SK-N-SH (cell line): ENCODE measurements at regions of chr9 and their contacts with region 1.

Region 1: GRCh38 chr9:113591001-113591898 is 127.7 kb downstream of the RGS3 start:
- DNase-seq: peak; percentile 78
- H3K4me3 ChIP-seq: no peak overlapping the region; a peak in 1 of 4 replicates
- H3K27ac ChIP-seq: no peak overlapping the region
- H3K4me1 ChIP-seq: peaks cover 11 to 32% of the 10 kb centered on the region in 2 experiments
- H3K27me3 ChIP-seq: no peaks in the 10 kb centered on the region
- CTCF ChIP-seq: peak; percentile 93
- EP300 ChIP-seq: no peak
- RAD21 ChIP-seq: peak; percentile 99

Region 2: GRCh38 chr9:113401027-113401792 is 190.0 kb before region 1 on chr9 and contains the start of gene ALAD:
- CTCF ChIA-PET with region 1: interaction called, 145 read pairs
- POLR2A ChIA-PET with region 1: no interaction called
- DNase-seq: peak; percentile 100
- H3K4me3 ChIP-seq: peak within 1 kb of the TSS; percentile 85 to 98
- H3K27ac ChIP-seq: peak within 1 kb of the TSS; percentile 46 to 62; a peak in 3 of 4 replicates
- H3K4me1 ChIP-seq: peaks cover 8 to 10% of the 10 kb centered on the region in 2 experiments; a peak in 1 of 4 replicates
- H3K27me3 ChIP-seq: no peaks in the 10 kb centered on the region
- CTCF ChIP-seq: peak; percentile 93
- EP300 ChIP-seq: no peak
- RAD21 ChIP-seq: peak; percentile 69
- polyA plus RNA-seq, gene ALAD: 10.7 and 11.8 TPM in 2 replicates

Region 3: DNA sequence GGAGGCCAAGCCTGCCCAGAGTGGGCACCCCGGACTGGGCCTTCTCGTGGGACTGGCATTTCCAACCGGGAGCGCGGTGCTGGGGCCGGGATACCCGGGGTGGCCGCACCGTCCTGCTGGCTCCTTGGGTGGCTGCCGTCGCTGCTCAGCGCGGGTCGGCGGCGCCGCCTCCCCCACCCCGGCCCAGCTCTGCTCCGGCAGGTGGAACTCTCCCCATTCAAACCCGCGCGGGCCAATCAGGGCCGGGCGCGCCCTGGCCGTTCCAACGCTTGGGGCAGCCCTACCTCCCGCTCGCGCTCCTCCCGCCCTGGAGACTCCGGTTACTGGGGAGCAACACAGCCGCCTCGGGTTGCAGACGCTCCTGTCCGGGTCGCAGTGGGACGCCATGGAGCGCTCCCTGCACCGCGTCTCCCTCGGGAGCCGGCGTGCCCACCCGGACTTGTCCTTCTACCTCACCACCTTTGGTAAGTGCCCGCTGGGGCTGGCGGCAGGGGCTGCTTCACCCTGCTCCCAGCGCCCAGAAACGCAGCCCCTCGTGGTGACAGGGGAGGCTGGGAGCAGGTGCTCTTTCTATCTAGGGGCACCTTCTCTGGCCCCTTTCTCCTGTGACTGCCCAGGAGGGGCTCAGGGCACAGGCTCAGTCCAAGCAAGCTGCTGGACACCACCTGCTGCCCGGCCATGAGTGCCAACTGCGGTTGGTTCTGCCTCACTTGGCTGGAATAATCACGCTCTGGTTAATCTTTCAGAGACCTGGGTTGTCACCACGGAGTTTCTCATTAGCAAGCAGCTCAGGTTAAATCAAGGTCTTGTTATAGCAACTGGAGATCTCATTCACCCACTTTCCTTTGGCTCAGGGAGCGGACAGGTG is 127.6 kb before region 1 on chr9 and contains the start of gene RGS3:
- CTCF ChIA-PET with region 1: interaction called, 17 read pairs
- POLR2A ChIA-PET with region 1: no interaction called
- DNase-seq: no peak
- H3K4me3 ChIP-seq: no peak within 1 kb of the TSS
- H3K27ac ChIP-seq: no peak within 1 kb of the TSS
- H3K4me1 ChIP-seq: peaks cover 0 to 18% of the 10 kb centered on the region in 2 experiments; a peak in 2 of 4 replicates
- H3K27me3 ChIP-seq: no peaks in the 10 kb centered on the region
- CTCF ChIP-seq: no peak
- EP300 ChIP-seq: no peak
- RAD21 ChIP-seq: no peak
- polyA plus RNA-seq, gene RGS3: 50.6 and 60.7 TPM in 2 replicates

Region 4: DNA sequence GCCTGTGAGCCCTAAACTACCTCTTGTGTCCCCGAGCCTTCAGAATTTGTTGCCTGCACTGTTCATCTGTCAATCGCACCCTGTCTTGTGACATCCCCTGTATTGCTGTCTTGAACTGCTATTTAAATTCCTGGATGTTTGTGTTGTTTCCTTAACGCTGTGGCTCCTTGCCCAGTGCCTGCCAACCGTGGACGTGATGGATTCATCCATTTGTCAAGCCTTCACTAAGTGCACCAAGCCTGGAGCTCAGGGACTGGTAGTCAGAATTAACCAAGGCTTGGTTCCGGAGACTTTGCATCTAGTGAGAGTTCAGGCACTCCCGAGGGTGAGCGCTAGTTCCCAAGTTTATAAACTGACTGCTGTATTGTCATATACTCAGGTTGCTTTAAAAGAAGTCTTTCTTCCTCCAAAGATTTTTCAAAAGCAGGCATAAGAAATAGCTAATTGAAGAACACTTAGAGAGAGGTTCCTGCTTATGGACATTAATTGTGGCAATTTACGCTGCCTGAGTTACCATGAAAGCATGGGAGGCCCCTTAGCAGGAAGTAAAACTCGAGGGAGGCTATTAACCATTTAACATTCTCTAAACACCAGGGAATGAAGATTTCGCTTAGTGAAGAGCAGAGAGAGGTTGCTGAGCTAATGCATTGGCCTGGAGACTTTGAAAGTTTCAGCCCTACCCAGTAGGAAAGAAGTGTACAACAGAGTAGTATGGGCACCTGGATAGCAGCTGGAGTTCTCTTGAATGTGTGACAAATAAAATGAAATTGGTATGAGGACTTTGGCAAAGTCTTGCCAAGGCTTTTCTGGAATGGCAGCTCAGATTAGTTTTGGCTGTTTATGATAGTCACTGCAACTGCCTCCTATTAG is 98.7 kb before region 1 on chr9:
- CTCF ChIA-PET with region 1: interaction called, 13 read pairs
- POLR2A ChIA-PET with region 1: no interaction called
- DNase-seq: no peak
- H3K4me3 ChIP-seq: no peak overlapping the region
- H3K27ac ChIP-seq: no peak overlapping the region
- H3K4me1 ChIP-seq: peaks cover 6 to 12% of the 10 kb centered on the region in 2 experiments; a peak in 2 of 4 replicates
- H3K27me3 ChIP-seq: no peaks in the 10 kb centered on the region
- CTCF ChIP-seq: no peak
- EP300 ChIP-seq: no peak
- RAD21 ChIP-seq: no peak

Region 5: GRCh38 chr9:113578882-113579282 is 12.4 kb before region 1 on chr9:
- CTCF ChIA-PET with region 1: interaction called, 44 read pairs
- POLR2A ChIA-PET with region 1: interaction called, 7 read pairs
- DNase-seq: peak; percentile 60
- H3K4me3 ChIP-seq: no peak overlapping the region
- H3K27ac ChIP-seq: peak overlapping the region; percentile 87 to 90
- H3K4me1 ChIP-seq: peaks cover 32 to 50% of the 10 kb centered on the region in 2 experiments
- H3K27me3 ChIP-seq: no peaks in the 10 kb centered on the region
- CTCF ChIP-seq: no peak
- EP300 ChIP-seq: peak in 1 of 2 experiments; percentile 94; a peak in 3 of 4 replicates
- RAD21 ChIP-seq: peak; percentile 18; the same call in 1 of the 2 replicates

Region 6: DNA sequence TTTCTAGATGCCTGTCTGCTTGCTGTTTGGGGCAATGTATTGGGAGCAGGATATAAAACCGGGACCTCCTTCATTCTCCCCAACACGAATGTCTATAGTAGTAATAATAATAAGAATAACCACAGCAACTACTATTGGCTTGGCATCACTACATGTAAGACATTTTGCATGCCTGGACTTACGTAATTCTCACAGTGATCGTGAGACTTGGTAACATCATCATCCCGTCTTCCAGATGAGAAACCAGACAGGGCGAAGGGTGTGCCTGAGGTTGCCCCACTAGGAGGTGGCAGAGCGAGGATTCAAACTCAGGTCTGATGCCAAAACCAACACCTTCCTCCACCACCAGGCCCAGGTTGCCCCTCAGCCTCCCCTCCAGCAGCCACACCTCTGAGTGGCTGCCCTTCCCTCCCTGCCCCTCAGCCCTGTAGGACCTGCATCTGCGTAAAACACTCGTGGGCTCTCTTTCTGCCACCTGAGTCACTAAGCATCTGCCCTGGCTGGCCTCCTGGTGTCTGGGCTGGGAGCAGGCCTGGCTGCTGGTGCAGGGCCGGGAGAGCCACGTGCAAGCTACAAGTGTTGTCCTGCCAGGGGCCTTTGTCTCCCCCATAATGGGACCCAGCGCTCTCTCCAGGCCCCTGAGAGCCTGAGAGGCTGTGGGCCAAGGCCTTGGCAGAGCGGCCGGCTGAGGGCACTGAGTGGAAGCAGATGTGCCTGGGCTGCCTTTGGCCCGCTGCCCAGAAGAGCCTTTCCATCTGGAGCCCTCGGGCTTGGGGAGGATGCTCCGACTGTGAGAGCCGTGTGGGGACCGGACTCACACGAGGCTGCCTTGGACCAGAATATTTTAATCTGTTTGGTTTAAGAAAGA is 57.6 kb after region 1 on chr9:
- CTCF ChIA-PET with region 1: interaction called, 1,335 read pairs
- POLR2A ChIA-PET with region 1: interaction called, 23 read pairs
- DNase-seq: peak; percentile 90
- H3K4me3 ChIP-seq: no peak overlapping the region
- H3K27ac ChIP-seq: peak overlapping the region; percentile 91 to 99
- H3K4me1 ChIP-seq: peaks cover 16 to 56% of the 10 kb centered on the region in 2 experiments
- H3K27me3 ChIP-seq: no peaks in the 10 kb centered on the region
- CTCF ChIP-seq: no peak
- EP300 ChIP-seq: peak; percentile 50 to 90; a peak in 2 of 4 replicates
- RAD21 ChIP-seq: peak; percentile 38

Region 7: GRCh38 chr9:113675475-113675941 is 84.3 kb after region 1 on chr9:
- CTCF ChIA-PET with region 1: interaction called, 17 read pairs
- POLR2A ChIA-PET with region 1: no interaction called
- DNase-seq: no peak
- H3K4me3 ChIP-seq: no peak overlapping the region
- H3K27ac ChIP-seq: peak overlapping the region; percentile 4 to 98; a peak in 3 of 4 replicates
- H3K4me1 ChIP-seq: peaks cover 0 to 34% of the 10 kb centered on the region in 2 experiments; a peak in 3 of 4 replicates
- H3K27me3 ChIP-seq: no peaks in the 10 kb centered on the region
- CTCF ChIP-seq: no peak
- EP300 ChIP-seq: peak in 1 of 2 experiments; percentile 90; a peak in 2 of 4 replicates
- RAD21 ChIP-seq: no peak